ENCODE measurements at regions of chr7 and their contacts with region 1.

Region 1: GRCh38 chr7:27095897-27096767 is at the start of gene HOXA1:
- DNase-seq: peak; percentile 44 to 72 (median 63)
- ATAC-seq: peak; percentile 90
- H3K4me3 ChIP-seq: peak within 1 kb of the TSS; percentile 76
- H3K4me3 Mint-ChIP-seq: peak within 1 kb of the TSS; percentile 79 to 94 (median 88)
- H3K27ac ChIP-seq: peak within 1 kb of the TSS; percentile 57
- H3K27ac Mint-ChIP-seq: peak within 1 kb of the TSS in 4 of 9 donors; percentile 33 to 77 (median 66)
- H3K4me1 ChIP-seq: peaks cover 9 to 21% of the 10 kb centered on the region in 2 donors
- H3K4me1 Mint-ChIP-seq: peaks cover 9 to 36% (median 30%) of the 10 kb centered on the region in 7 donors
- H3K27me3 ChIP-seq: peaks cover 3 to 9% of the 10 kb centered on the region in 2 donors
- H3K27me3 Mint-ChIP-seq: peaks cover 85 to 94% (median 87%) of the 10 kb centered on the region in 5 donors
- total RNA-seq, gene HOXA1: 0.10 to 1.1 (median 0.41) TPM in 4 of 5 experiments, not detected in the other

Region 2: GRCh38 chr7:26376175-26376917 is 719.8 kb before region 1 on chr7:
- CTCF ChIA-PET with region 1: no interaction called
- POLR2A ChIA-PET with region 1: no interaction called
- intact Hi-C with region 1: loop called in 1 of 2 experiments (anchors 5 kb)
- DNase-seq: peak in 7 of 9 donors; percentile 13 to 56 (median 20)
- ATAC-seq: peak; percentile 51
- H3K4me3 ChIP-seq: peak overlapping the region; percentile 54
- H3K4me3 Mint-ChIP-seq: peak overlapping the region; percentile 83 to 95 (median 85)
- H3K27ac ChIP-seq: no peak overlapping the region
- H3K27ac Mint-ChIP-seq: peak overlapping the region in 1 of 9 donors; percentile 65
- H3K4me1 ChIP-seq: peaks cover 4 to 6% of the 10 kb centered on the region in 2 donors
- H3K4me1 Mint-ChIP-seq: peaks cover 0 to 8% (median 4%) of the 10 kb centered on the region in 7 donors
- H3K27me3 ChIP-seq: peaks cover 4 to 24% of the 10 kb centered on the region in 2 donors
- H3K27me3 Mint-ChIP-seq: peaks cover 28 to 62% (median 37%) of the 10 kb centered on the region in 5 donors

Region 3: GRCh38 chr7:26864309-26865093 is 231.6 kb before region 1 on chr7 and contains the start of gene SKAP2:
- CTCF ChIA-PET with region 1: no interaction called
- POLR2A ChIA-PET with region 1: no interaction called
- intact Hi-C with region 1: loop called (anchors 2 to 5 kb)
- DNase-seq: peak; percentile 41 to 89 (median 63)
- ATAC-seq: peak; percentile 93
- H3K4me3 ChIP-seq: peak within 1 kb of the TSS; percentile 88
- H3K4me3 Mint-ChIP-seq: peak within 1 kb of the TSS; percentile 72 to 92 (median 88)
- H3K27ac ChIP-seq: peak within 1 kb of the TSS; percentile 23
- H3K27ac Mint-ChIP-seq: peak within 1 kb of the TSS; percentile 36 to 89 (median 74)
- H3K4me1 ChIP-seq: peaks cover 0 to 4% of the 10 kb centered on the region in 2 donors
- H3K4me1 Mint-ChIP-seq: peaks cover 5 to 24% (median 19%) of the 10 kb centered on the region in 7 donors
- H3K27me3 ChIP-seq: peaks cover 0 to 9% of the 10 kb centered on the region in 2 donors
- H3K27me3 Mint-ChIP-seq: peaks cover 46 to 68% (median 49%) of the 10 kb centered on the region in 5 donors
- total RNA-seq, gene SKAP2: 2.7 to 31.4 (median 5.1) TPM

Region 4: GRCh38 chr7:26891400-26892355 is 204.5 kb before region 1 on chr7:
- CTCF ChIA-PET with region 1: no interaction called
- POLR2A ChIA-PET with region 1: no interaction called
- intact Hi-C with region 1: no loop called
- DNase-seq: no peak
- ATAC-seq: no peak
- H3K4me3 ChIP-seq: no peak overlapping the region
- H3K4me3 Mint-ChIP-seq: no peak overlapping the region
- H3K27ac ChIP-seq: no peak overlapping the region
- H3K27ac Mint-ChIP-seq: no peak overlapping the region
- H3K4me1 ChIP-seq: no peaks in the 10 kb centered on the region
- H3K4me1 Mint-ChIP-seq: no peaks in the 10 kb centered on the region
- H3K27me3 ChIP-seq: peaks cover 0 to 3% of the 10 kb centered on the region in 2 donors
- H3K27me3 Mint-ChIP-seq: peaks cover 19 to 56% (median 26%) of the 10 kb centered on the region in 5 donors

Region 5: DNA sequence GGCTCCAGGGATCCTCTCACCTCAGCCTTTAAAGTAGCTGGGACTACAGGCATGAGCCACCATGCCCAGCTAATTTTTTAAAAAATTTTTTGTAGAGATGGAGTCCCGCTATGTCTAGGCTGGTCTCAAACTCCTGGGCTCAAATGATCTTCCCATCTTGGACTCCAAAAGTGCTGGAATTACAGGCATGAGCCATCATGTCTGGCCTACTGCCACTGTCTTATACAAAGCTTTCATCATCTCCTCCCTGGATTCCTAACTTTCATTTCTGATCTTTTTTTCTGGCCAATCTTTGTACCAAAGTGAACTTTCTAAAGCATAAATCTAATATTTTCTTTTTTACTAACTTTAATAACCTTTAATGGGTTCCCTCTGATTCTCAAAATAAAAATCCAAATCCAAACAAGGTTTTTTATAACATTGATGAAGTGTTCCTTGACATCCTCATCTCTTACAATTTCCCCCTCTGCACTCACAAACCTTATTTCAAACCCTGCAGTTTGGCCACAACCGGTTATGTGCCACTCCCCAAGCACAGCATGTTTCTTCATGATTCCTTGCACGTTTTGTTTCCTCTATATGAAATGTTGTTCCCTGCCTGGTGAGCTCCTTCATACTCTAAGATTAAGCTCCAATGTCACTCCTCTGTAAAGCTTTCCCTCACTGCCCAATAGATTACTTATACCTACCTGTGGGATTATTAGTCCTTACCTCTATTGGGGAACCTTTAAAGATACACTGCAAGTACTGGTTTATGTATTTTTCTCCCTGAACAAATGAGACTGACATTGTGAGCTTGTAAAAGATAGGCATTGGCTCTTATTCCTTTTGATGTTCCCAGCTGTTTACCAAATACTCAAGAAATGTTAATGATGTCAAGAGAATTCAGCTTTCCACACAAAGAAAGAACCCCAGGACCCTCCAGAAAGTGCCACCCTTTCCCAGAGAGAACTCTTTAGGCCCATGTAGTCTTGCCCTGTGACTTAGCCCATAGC is 102.0 kb before region 1 on chr7:
- CTCF ChIA-PET with region 1: no interaction called
- POLR2A ChIA-PET with region 1: no interaction called
- intact Hi-C with region 1: no loop called
- DNase-seq: no peak
- ATAC-seq: no peak
- H3K4me3 ChIP-seq: no peak overlapping the region
- H3K4me3 Mint-ChIP-seq: no peak overlapping the region
- H3K27ac ChIP-seq: no peak overlapping the region
- H3K27ac Mint-ChIP-seq: no peak overlapping the region
- H3K4me1 ChIP-seq: no peaks in the 10 kb centered on the region
- H3K4me1 Mint-ChIP-seq: no peaks in the 10 kb centered on the region
- H3K27me3 ChIP-seq: no peaks in the 10 kb centered on the region
- H3K27me3 Mint-ChIP-seq: peaks cover 0 to 14% (median 2%) of the 10 kb centered on the region in 5 donors

Region 6: GRCh38 chr7:27031289-27032172 is 64.6 kb before region 1 on chr7:
- CTCF ChIA-PET with region 1: no interaction called
- POLR2A ChIA-PET with region 1: no interaction called
- intact Hi-C with region 1: loop called in 1 of 2 experiments (anchors 5 kb)
- DNase-seq: peak in 5 of 9 donors; percentile 17 to 43 (median 35)
- ATAC-seq: peak; percentile 72
- H3K4me3 ChIP-seq: peak overlapping the region; percentile 25
- H3K4me3 Mint-ChIP-seq: peak overlapping the region; percentile 15 to 79 (median 62)
- H3K27ac ChIP-seq: peak overlapping the region; percentile 36
- H3K27ac Mint-ChIP-seq: peak overlapping the region; percentile 75 to 93 (median 88)
- H3K4me1 ChIP-seq: peaks cover 0 to 12% of the 10 kb centered on the region in 2 donors
- H3K4me1 Mint-ChIP-seq: peaks cover 11 to 34% (median 26%) of the 10 kb centered on the region in 7 donors
- H3K27me3 ChIP-seq: no peaks in the 10 kb centered on the region
- H3K27me3 Mint-ChIP-seq: no peaks in the 10 kb centered on the region

Region 7: GRCh38 chr7:27130540-27131389 is 34.6 kb after region 1 on chr7 and contains the start of gene HOXA4:
- CTCF ChIA-PET with region 1: no interaction called
- POLR2A ChIA-PET with region 1: no interaction called
- intact Hi-C with region 1: loop called (anchors 2 to 5 kb)
- DNase-seq: peak; percentile 52 to 90 (median 78)
- ATAC-seq: peak; percentile 96
- H3K4me3 ChIP-seq: peak within 1 kb of the TSS; percentile 72
- H3K4me3 Mint-ChIP-seq: peak within 1 kb of the TSS; percentile 44 to 88 (median 68)
- H3K27ac ChIP-seq: peak within 1 kb of the TSS; percentile 63
- H3K27ac Mint-ChIP-seq: peak within 1 kb of the TSS in 5 of 9 donors; percentile 29 to 84 (median 73)
- H3K4me1 ChIP-seq: no peaks in the 10 kb centered on the region
- H3K4me1 Mint-ChIP-seq: peaks cover 0 to 18% (median 2%) of the 10 kb centered on the region in 7 donors
- H3K27me3 ChIP-seq: peaks cover 0 to 3% of the 10 kb centered on the region in 2 donors
- H3K27me3 Mint-ChIP-seq: peaks cover 32 to 72% (median 58%) of the 10 kb centered on the region in 5 donors
- total RNA-seq, gene HOXA4: not detected

Region 8: GRCh38 chr7:27150568-27151340 is 54.6 kb after region 1 on chr7:
- CTCF ChIA-PET with region 1: interaction called, 3 read pairs
- POLR2A ChIA-PET with region 1: no interaction called
- intact Hi-C with region 1: loop called (anchors 2 to 5 kb)
- DNase-seq: peak in 8 of 9 donors; percentile 34 to 74 (median 62)
- ATAC-seq: peak; percentile 89
- H3K4me3 ChIP-seq: peak overlapping the region; percentile 75
- H3K4me3 Mint-ChIP-seq: peak overlapping the region; percentile 47 to 80 (median 77)
- H3K27ac ChIP-seq: no peak overlapping the region
- H3K27ac Mint-ChIP-seq: peak overlapping the region in 2 of 9 donors; percentile 32 to 79
- H3K4me1 ChIP-seq: peaks cover 34 to 44% of the 10 kb centered on the region in 2 donors
- H3K4me1 Mint-ChIP-seq: peaks cover 18 to 65% (median 47%) of the 10 kb centered on the region in 7 donors
- H3K27me3 ChIP-seq: peaks cover 52 to 73% of the 10 kb centered on the region in 2 donors
- H3K27me3 Mint-ChIP-seq: peaks cover 81 to 93% (median 90%) of the 10 kb centered on the region in 5 donors

Region 9: GRCh38 chr7:27242555-27243339 is 146.6 kb after region 1 on chr7 and contains the start of gene EVX1:
- CTCF ChIA-PET with region 1: no interaction called
- POLR2A ChIA-PET with region 1: no interaction called
- intact Hi-C with region 1: loop called in 1 of 2 experiments (anchors 5 kb)
- DNase-seq: peak in 7 of 9 donors; percentile 29 to 74 (median 52)
- ATAC-seq: peak; percentile 60
- H3K4me3 ChIP-seq: no peak within 1 kb of the TSS
- H3K4me3 Mint-ChIP-seq: peak within 1 kb of the TSS in 9 of 10 donors; percentile 32 to 81 (median 57)
- H3K27ac ChIP-seq: no peak within 1 kb of the TSS
- H3K27ac Mint-ChIP-seq: peak within 1 kb of the TSS in 6 of 9 donors; percentile 40 to 84 (median 62)
- H3K4me1 ChIP-seq: peaks cover 0 to 3% of the 10 kb centered on the region in 2 donors
- H3K4me1 Mint-ChIP-seq: peaks cover 4 to 52% (median 46%) of the 10 kb centered on the region in 7 donors
- H3K27me3 ChIP-seq: peaks cover 0 to 37% of the 10 kb centered on the region in 2 donors
- H3K27me3 Mint-ChIP-seq: peaks cover 70 to 88% (median 81%) of the 10 kb centered on the region in 5 donors
- total RNA-seq, gene EVX1: 0.11 TPM in 1 of 5 experiments, not detected in the others

Measured in naive thymus-derived CD4-positive, alpha-beta T cell (primary cell).